Vagina (tissue), 2 donors: ENCODE measurements at regions of chr7 and their contacts with region 1.

Region 1: DNA sequence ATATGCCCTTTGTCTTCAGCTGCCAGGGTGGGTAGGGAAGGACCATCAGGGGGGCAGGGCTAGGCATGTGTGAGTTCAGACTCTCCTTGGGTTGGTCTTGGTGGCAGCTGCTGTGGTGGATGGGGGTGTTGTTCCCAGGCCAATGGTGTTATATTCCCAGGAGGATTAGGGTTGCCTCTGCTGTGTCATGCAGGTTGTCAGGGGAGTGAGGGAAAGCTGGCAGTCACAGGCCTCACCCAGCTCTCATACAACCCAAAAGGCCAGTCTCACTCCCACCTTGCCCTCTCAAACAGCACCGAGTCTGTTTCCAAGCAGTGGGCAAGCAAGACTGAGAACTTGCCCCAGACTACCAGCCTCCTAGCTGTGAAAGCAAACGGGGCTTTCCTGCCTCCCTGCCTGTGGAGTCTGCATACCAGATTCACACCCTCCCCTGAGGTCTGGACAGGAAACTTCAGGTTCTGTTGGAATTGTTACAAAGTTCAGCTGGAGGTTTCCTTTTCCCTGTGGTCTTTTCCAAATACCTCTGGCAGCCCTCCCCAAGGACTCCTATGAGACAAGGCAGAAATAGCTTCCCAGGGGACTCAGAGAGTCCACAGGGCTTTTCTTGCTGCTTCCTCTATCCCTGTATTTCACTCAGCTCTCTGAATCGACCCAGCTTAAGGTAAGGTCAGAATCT is 1.4 kb downstream of the HYAL4 start:
- DNase-seq: no peak
- H3K4me3 ChIP-seq: no peak overlapping the region
- H3K27ac ChIP-seq: no peak overlapping the region
- H3K4me1 ChIP-seq: no peaks in the 10 kb centered on the region
- H3K27me3 ChIP-seq: no peaks in the 10 kb centered on the region
- CTCF ChIP-seq: no peak
- POLR2A ChIP-seq: no peak

Region 2: GRCh38 chr7:123712619-123713018 is 133.7 kb before region 1 on chr7:
- intact Hi-C with region 1: no loop called
- DNase-seq: no peak
- H3K4me3 ChIP-seq: no peak overlapping the region
- H3K27ac ChIP-seq: no peak overlapping the region
- H3K4me1 ChIP-seq: peaks cover 43% of the 10 kb centered on the region
- H3K27me3 ChIP-seq: no peaks in the 10 kb centered on the region
- CTCF ChIP-seq: no peak
- POLR2A ChIP-seq: no peak

Region 3: GRCh38 chr7:123860848-123861247 is 14.5 kb after region 1 on chr7:
- intact Hi-C with region 1: no loop called
- DNase-seq: no peak
- H3K4me3 ChIP-seq: no peak overlapping the region
- H3K27ac ChIP-seq: no peak overlapping the region
- H3K4me1 ChIP-seq: no peaks in the 10 kb centered on the region
- H3K27me3 ChIP-seq: no peaks in the 10 kb centered on the region
- CTCF ChIP-seq: no peak
- POLR2A ChIP-seq: no peak

Region 4: GRCh38 chr7:124996778-124997177 is 1150.4 kb after region 1 on chr7:
- intact Hi-C with region 1: no loop called
- DNase-seq: no peak
- H3K4me3 ChIP-seq: no peak overlapping the region
- H3K27ac ChIP-seq: no peak overlapping the region
- H3K4me1 ChIP-seq: no peaks in the 10 kb centered on the region
- H3K27me3 ChIP-seq: no peaks in the 10 kb centered on the region
- CTCF ChIP-seq: no peak
- POLR2A ChIP-seq: no peak

Region 5: DNA sequence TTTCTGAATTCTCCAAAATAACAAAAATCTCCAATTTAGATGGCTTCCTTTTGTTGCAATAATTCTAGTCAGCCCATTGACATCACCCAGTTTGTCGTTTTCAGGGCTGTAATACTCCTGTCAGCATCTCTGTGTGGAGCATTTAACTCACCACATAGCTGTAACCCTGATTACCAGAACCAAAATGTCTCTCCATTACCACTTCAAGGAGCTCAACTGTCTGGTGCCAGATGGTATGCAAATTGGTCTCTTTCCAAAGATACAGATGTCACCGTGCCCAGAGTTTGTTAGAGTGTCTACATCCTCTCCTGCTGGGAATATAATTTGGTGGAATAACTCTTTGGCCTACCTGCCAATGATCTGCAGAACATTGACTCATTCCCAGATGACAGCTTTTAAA is 1433.6 kb after region 1 on chr7:
- intact Hi-C with region 1: loop called (anchors 5 kb)
- DNase-seq: no peak
- H3K4me3 ChIP-seq: no peak overlapping the region
- H3K27ac ChIP-seq: no peak overlapping the region
- H3K4me1 ChIP-seq: no peaks in the 10 kb centered on the region
- H3K27me3 ChIP-seq: no peaks in the 10 kb centered on the region
- CTCF ChIP-seq: no peak
- POLR2A ChIP-seq: no peak